Activated CD4-positive, alpha-beta T cell treated with anti-CD3 and anti-CD28 coated beads for 36 hours (primary cell): ENCODE measurements at regions of chr6 and their contacts with region 1.

Region 1: GRCh38 chr6:80214436-80215022 is 108.1 kb downstream of the BCKDHB start:
- DNase-seq: peak; percentile 22
- ATAC-seq: peak; percentile 76
- H3K4me3 Mint-ChIP-seq: no peak overlapping the region
- H3K27ac Mint-ChIP-seq: no peak overlapping the region
- H3K4me1 Mint-ChIP-seq: peaks cover 5% of the 10 kb centered on the region
- H3K27me3 Mint-ChIP-seq: no peaks in the 10 kb centered on the region

Region 2: DNA sequence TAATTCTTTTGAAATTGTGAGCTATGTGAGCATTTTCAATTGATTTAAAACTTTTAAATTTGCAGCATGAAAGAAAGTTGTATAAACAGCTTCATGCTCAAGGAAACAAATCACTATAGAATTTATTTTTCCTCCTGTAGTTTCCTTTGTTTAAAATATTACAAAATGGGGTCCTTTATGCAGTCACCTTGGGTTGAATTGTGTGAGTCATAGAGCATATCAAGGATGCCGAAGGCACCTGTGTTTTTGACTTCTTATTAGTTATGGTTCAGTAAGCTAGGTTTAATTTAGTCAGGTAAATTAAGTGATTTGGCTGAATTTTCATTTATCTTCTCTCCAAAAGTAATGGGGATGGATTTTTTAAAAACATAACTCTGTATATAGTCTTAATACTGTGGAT is 11.2 kb before region 1 on chr6:
- CTCF ChIA-PET with region 1: interaction called, 13 read pairs
- POLR2A ChIA-PET with region 1: no interaction called
- intact Hi-C with region 1: no loop called
- DNase-seq: no peak
- ATAC-seq: no peak
- H3K4me3 Mint-ChIP-seq: no peak overlapping the region
- H3K27ac Mint-ChIP-seq: no peak overlapping the region
- H3K4me1 Mint-ChIP-seq: no peaks in the 10 kb centered on the region
- H3K27me3 Mint-ChIP-seq: no peaks in the 10 kb centered on the region

Region 3: DNA sequence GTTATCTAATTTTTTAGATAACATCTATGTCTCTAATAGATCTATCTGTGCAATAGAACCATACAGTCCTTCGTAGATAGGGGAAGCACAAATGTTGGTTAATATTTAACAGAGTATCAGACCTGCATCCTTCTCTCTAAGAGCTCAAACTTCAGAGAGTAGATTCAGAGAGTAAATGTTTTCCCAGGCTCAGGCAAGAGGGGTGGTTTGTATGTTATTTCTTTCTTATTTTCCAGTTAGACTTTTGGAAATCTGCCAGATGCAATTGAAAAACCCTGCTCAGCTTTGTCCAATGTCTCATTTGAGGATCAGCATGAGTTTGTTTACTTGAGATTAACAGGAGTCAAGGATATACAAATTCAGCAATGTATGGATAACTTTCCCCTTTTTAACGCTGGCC is 253.9 kb after region 1 on chr6:
- CTCF ChIA-PET with region 1: no interaction called
- POLR2A ChIA-PET with region 1: no interaction called
- intact Hi-C with region 1: loop called in 1 of 2 experiments (anchors 10 kb)
- DNase-seq: no peak
- ATAC-seq: no peak
- H3K4me3 Mint-ChIP-seq: no peak overlapping the region
- H3K27ac Mint-ChIP-seq: no peak overlapping the region
- H3K4me1 Mint-ChIP-seq: no peaks in the 10 kb centered on the region
- H3K27me3 Mint-ChIP-seq: no peaks in the 10 kb centered on the region

Region 4: GRCh38 chr6:80579391-80580023 is 365.0 kb after region 1 on chr6:
- CTCF ChIA-PET with region 1: no interaction called
- POLR2A ChIA-PET with region 1: no interaction called
- intact Hi-C with region 1: no loop called
- DNase-seq: no peak
- ATAC-seq: no peak
- H3K4me3 Mint-ChIP-seq: no peak overlapping the region
- H3K27ac Mint-ChIP-seq: no peak overlapping the region
- H3K4me1 Mint-ChIP-seq: no peaks in the 10 kb centered on the region
- H3K27me3 Mint-ChIP-seq: no peaks in the 10 kb centered on the region

Region 5: GRCh38 chr6:81353262-81353661 is 1138.7 kb after region 1 on chr6:
- CTCF ChIA-PET with region 1: no interaction called
- POLR2A ChIA-PET with region 1: no interaction called
- intact Hi-C with region 1: loop called in 1 of 2 experiments (anchors 10 kb)
- DNase-seq: no peak
- ATAC-seq: no peak
- H3K4me3 Mint-ChIP-seq: no peak overlapping the region
- H3K27ac Mint-ChIP-seq: no peak overlapping the region
- H3K4me1 Mint-ChIP-seq: no peaks in the 10 kb centered on the region
- H3K27me3 Mint-ChIP-seq: no peaks in the 10 kb centered on the region